Activated naive CD4-positive, alpha-beta T cell treated with anti-CD3 and anti-CD28 coated beads for 36 hours (primary cell): ENCODE measurements at regions of chr13 and their contacts with region 1.

Region 1: GRCh38 chr13:77697217-77698103 is at the start of gene SLAIN1:
- DNase-seq: peak; percentile 79
- H3K4me3 Mint-ChIP-seq: peak within 1 kb of the TSS; percentile 96
- H3K27ac Mint-ChIP-seq: peak within 1 kb of the TSS; percentile 59
- H3K4me1 Mint-ChIP-seq: peaks cover 30% of the 10 kb centered on the region
- H3K27me3 Mint-ChIP-seq: no peaks in the 10 kb centered on the region
- total RNA-seq, gene SLAIN1: 18.0 to 21.7 TPM

Region 2: GRCh38 chr13:76991796-76992547 is 705.5 kb before region 1 on chr13 and contains the start of gene CLN5:
- CTCF ChIA-PET with region 1: no interaction called
- intact Hi-C with region 1: loop called (anchors 2 kb)
- DNase-seq: peak; percentile 95
- H3K4me3 Mint-ChIP-seq: peak within 1 kb of the TSS; percentile 95
- H3K27ac Mint-ChIP-seq: peak within 1 kb of the TSS; percentile 97
- H3K4me1 Mint-ChIP-seq: peaks cover 39% of the 10 kb centered on the region
- H3K27me3 Mint-ChIP-seq: no peaks in the 10 kb centered on the region
- total RNA-seq, gene CLN5: 13.6 to 14.6 TPM

Region 3: DNA sequence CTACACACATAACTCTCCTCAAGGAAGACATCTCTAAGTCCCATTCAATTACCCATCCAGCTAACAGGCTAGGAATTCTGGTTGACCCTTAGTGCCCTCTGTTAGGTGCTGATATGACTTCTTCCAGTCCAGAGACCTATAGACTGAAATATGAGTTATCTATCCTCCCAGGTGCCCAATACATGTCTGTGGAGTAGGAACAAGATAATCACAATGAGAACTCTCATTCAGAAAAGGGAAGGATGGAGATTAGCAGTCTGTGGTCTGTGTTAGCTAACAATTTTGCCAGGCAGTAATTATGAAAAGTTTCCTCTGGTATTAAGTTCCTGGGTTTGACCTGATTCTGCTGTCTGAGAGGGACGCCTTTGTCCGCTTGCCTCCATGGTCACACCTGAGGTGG is 44.2 kb before region 1 on chr13:
- CTCF ChIA-PET with region 1: no interaction called
- intact Hi-C with region 1: no loop called
- DNase-seq: no peak
- H3K4me3 Mint-ChIP-seq: no peak overlapping the region
- H3K27ac Mint-ChIP-seq: no peak overlapping the region
- H3K4me1 Mint-ChIP-seq: no peaks in the 10 kb centered on the region
- H3K27me3 Mint-ChIP-seq: peaks cover 9% of the 10 kb centered on the region

Region 4: DNA sequence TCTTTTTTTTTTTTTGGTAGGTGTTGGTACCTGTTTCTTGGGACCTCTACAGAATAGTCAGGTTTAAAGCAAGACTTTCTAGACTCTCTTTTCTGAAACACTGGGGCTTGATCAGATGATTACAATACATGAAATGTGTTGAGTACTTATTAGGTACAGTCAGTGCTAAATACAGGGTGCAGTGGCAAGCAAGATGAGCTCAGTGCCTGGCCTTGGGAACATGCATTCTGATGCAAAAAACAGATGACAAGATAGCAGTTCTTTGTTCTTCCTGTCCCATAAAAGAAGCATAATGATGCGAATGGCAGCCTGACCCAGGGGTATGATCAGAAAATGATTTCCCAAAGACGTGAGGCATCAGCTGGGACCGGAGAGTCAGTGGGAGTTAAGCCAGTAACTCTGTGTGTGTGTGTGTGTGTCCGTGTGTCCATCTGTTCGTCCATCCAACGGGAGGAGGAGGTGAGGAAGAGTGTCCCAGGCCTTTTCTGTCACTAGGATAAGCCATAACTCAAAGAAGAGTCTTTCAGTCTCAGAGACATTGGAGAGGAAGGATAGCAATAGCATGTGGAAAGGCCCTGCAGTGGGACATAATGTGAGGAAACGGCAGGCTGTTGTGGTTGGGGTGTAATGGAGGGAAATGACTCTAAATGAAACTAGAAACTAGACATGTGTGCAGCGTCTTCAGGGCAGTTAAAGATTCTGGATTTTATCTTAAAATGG is 32.2 kb after region 1 on chr13:
- CTCF ChIA-PET with region 1: interaction called, 3 read pairs
- intact Hi-C with region 1: loop called (anchors 1 kb)
- DNase-seq: peak; percentile 69
- H3K4me3 Mint-ChIP-seq: no peak overlapping the region
- H3K27ac Mint-ChIP-seq: peak overlapping the region; percentile 57
- H3K4me1 Mint-ChIP-seq: peaks cover 31% of the 10 kb centered on the region
- H3K27me3 Mint-ChIP-seq: no peaks in the 10 kb centered on the region

Region 5: GRCh38 chr13:78022164-78022877 is 324.9 kb after region 1 on chr13:
- CTCF ChIA-PET with region 1: no interaction called
- intact Hi-C with region 1: loop called (anchors 5 kb)
- DNase-seq: peak; percentile 73
- H3K4me3 Mint-ChIP-seq: no peak overlapping the region
- H3K27ac Mint-ChIP-seq: no peak overlapping the region
- H3K4me1 Mint-ChIP-seq: peaks cover 6% of the 10 kb centered on the region
- H3K27me3 Mint-ChIP-seq: peaks cover 2% of the 10 kb centered on the region

Region 6: GRCh38 chr13:78409172-78409571 is 711.7 kb after region 1 on chr13:
- CTCF ChIA-PET with region 1: no interaction called
- intact Hi-C with region 1: no loop called
- DNase-seq: no peak
- H3K4me3 Mint-ChIP-seq: no peak overlapping the region
- H3K27ac Mint-ChIP-seq: no peak overlapping the region
- H3K4me1 Mint-ChIP-seq: no peaks in the 10 kb centered on the region
- H3K27me3 Mint-ChIP-seq: peaks cover 7% of the 10 kb centered on the region

Region 7: GRCh38 chr13:79194272-79194671 is 1496.8 kb after region 1 on chr13:
- CTCF ChIA-PET with region 1: no interaction called
- intact Hi-C with region 1: loop called (anchors 10 kb)
- DNase-seq: peak; percentile 76
- H3K4me3 Mint-ChIP-seq: no peak overlapping the region
- H3K27ac Mint-ChIP-seq: no peak overlapping the region
- H3K4me1 Mint-ChIP-seq: peaks cover 40% of the 10 kb centered on the region
- H3K27me3 Mint-ChIP-seq: no peaks in the 10 kb centered on the region